ENCODE measurements at regions of chr9 and their contacts with region 1.

Region 1: DNA sequence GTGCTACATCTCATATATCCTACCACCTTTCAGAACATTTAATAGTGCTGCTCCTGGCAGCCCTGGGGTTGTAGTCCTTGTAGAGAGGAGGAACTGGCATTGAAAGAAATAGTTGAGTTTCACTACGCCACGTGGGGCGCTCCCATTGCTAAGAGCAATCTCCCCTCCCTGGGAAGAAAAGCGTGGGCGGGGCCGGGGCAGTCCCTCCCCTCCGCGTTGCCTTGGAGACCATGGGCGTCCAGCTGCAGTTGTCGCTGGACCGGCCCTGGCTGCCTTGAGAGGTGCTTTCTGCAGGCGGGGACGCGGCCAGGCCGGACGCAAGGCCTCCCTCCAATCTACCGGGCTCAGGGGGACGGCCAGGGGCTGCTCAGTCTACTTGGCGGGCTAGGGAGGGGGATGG is 368 bp upstream of the CCDC180 start:
- DNase-seq: peak; percentile 71
- H3K4me3 ChIP-seq: peak overlapping the region in 2 of 3 experiments; percentile 5 to 8
- H3K27ac ChIP-seq: no peak overlapping the region
- H3K4me1 ChIP-seq: peaks cover 6% of the 10 kb centered on the region
- H3K27me3 ChIP-seq: no peaks in the 10 kb centered on the region
- CTCF ChIP-seq: peak; percentile 6 to 7

Region 2: GRCh38 chr9:97321711-97322504 is 14.8 kb after region 1 on chr9:
- CTCF ChIA-PET with region 1: no interaction called
- dilution Hi-C with region 1: no loop called
- in situ Hi-C with region 1: no loop called
- intact Hi-C with region 1: no loop called
- DNase-seq: no peak
- H3K4me3 ChIP-seq: no peak overlapping the region
- H3K27ac ChIP-seq: no peak overlapping the region
- H3K4me1 ChIP-seq: no peaks in the 10 kb centered on the region
- H3K27me3 ChIP-seq: no peaks in the 10 kb centered on the region
- CTCF ChIP-seq: no peak

Region 3: GRCh38 chr9:97868859-97869258 is 561.8 kb after region 1 on chr9:
- CTCF ChIA-PET with region 1: interaction called, 24 read pairs
- dilution Hi-C with region 1: no loop called
- in situ Hi-C with region 1: no loop called
- intact Hi-C with region 1: no loop called
- DNase-seq: no peak
- H3K4me3 ChIP-seq: no peak overlapping the region
- H3K27ac ChIP-seq: no peak overlapping the region
- H3K4me1 ChIP-seq: peaks cover 5% of the 10 kb centered on the region
- H3K27me3 ChIP-seq: no peaks in the 10 kb centered on the region
- CTCF ChIP-seq: no peak